Ascending aorta (tissue), 2 donors: ENCODE measurements at regions of chr6 and their contacts with region 1.

Region 1: DNA sequence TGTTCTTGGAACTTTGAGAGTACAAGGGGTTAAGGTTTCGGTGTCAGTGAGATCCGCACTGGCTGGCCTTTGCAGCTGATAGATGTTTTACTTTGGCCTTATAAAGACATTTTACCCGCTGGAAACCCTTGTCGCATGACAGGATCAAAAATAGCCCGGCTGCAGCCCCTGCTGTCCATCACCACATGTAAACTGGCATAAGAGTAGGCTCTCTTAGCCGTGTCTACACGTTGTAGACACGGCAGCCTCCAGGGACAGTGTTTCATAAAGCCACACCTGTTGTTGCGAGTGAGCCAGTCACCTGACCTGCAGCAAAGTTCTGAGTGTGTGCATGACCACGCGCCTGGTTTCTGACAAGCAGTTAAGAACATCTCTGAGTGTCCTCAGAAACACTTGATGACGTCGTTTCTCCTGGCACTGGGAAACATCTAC is 8.5 kb downstream of the RBM24 start:
- DNase-seq: peak; percentile 56 to 82
- H3K4me3 ChIP-seq: peak overlapping the region in 1 of 2 donors; percentile 55
- H3K27ac ChIP-seq: peak overlapping the region; percentile 41 to 78
- H3K4me1 ChIP-seq: peaks cover 0 to 7% of the 10 kb centered on the region in 2 donors
- H3K27me3 ChIP-seq: no peaks in the 10 kb centered on the region
- CTCF ChIP-seq: no peak

Region 2: DNA sequence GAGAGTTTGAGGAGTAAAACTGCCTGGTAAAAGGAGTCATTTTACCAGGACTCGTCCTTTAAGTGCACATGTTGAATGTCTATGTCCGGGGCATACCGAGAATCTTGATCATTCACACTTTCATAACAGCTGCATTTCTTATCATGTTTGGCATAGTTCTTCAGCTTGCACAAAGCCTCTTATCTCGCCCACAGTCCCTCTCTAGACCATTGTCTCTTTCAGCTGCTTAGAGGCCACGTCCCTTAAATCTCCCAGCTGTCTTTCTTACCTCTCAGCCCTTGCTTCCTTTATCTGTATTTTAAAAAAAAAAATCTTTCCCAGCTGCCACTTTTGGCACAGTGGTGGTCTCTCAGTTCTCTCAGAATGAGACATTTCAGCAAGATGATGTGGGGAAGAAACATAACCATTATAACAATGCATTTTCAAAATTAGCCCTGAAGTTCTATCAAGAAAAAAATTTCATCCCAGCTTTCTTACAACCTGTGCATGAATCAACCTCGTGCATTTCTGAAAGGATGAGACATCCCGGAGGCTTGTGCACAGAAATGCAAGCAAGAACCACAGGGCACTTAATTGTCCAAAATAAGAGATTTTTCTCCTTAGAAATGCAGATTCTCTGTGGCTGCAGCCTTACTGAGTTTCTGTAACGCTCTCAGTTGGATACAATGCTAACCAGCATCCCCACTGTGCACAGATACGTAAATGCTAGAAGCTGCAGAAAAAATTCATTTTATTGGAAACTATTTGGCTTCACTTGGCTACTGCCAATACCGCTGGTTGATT is 15.8 kb after region 1 on chr6:
- intact Hi-C with region 1: no loop called
- DNase-seq: no peak
- H3K4me3 ChIP-seq: no peak overlapping the region
- H3K27ac ChIP-seq: no peak overlapping the region
- H3K4me1 ChIP-seq: no peaks in the 10 kb centered on the region
- H3K27me3 ChIP-seq: no peaks in the 10 kb centered on the region
- CTCF ChIP-seq: no peak

Region 3: GRCh38 chr6:17470938-17471327 is 181.3 kb after region 1 on chr6:
- intact Hi-C with region 1: loop called (anchors 2 kb)
- DNase-seq: no peak
- H3K4me3 ChIP-seq: peak overlapping the region in 1 of 2 donors; percentile 14
- H3K27ac ChIP-seq: peak overlapping the region; percentile 61 to 81
- H3K4me1 ChIP-seq: peaks cover 0 to 17% of the 10 kb centered on the region in 2 donors
- H3K27me3 ChIP-seq: no peaks in the 10 kb centered on the region
- CTCF ChIP-seq: peak in 2 of 3 experiments; percentile 17 to 19

Region 4: DNA sequence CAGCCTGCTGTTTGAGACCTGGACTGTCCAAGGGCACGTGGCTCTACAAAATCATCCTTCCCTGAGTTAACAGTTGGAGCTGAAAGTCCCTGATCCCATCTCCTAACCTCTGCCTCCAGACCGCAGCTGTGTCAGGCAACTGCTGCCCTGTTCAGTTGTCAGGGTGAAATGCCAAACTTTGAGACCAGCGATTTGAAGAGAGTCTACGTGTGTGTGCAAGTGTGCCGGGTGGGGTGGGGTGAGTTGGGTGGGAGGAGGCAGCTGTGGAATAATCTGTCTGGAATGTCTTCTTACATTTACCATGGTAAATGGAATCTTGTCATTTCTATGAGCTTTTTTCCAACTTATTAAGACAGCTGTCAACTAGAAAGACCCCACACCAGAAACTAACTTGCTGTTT is 229.5 kb after region 1 on chr6:
- intact Hi-C with region 1: no loop called
- DNase-seq: no peak
- H3K4me3 ChIP-seq: no peak overlapping the region
- H3K27ac ChIP-seq: no peak overlapping the region
- H3K4me1 ChIP-seq: no peaks in the 10 kb centered on the region
- H3K27me3 ChIP-seq: no peaks in the 10 kb centered on the region
- CTCF ChIP-seq: no peak